Naive thymus-derived CD4-positive, alpha-beta T cell (primary cell): ENCODE measurements at regions of chr6 and their contacts with region 1.

Region 1: DNA sequence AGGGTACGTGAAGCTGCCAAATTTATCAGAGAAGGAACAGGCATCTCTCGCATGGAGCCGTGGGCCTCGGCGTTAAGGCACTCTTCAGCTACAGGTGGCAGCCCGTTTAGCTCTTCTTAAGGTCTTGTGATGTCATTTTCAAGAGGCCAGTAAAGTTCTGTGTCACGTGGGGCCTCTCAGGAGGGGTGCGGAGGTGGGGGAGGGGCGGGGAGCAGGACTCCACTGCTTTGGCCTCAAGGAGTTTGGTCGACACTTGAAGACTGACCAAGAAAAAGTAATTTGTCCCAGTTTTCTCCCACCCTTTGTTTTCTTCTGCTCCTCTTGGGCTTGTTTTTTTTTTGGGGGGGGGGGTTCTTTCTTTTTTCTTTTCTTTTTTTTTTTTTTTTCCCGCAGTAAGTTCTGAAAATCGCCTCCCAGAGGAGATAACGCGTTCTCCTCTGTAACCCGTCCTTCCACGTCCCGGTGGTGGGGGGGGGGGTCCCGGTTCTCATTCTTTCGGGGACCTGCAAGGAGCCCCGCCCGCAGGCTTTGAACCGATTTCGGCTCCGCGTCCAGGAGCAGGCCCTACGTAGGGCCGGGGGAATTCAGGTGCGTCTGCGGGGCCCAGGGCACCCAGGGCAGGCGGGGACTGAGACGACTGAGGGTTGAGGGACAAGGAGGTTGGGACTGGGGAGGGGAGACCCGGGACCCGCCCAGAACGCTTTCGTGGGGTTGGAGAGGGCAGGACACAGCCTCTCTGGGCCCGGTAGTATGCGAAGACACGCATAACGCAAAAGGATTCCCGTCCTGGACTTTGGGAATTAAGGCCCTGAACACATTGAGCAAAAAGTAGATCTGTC is 26.0 kb downstream of the GPX6 start:
- DNase-seq: peak; percentile 25 to 49 (median 39)
- ATAC-seq: peak; percentile 75
- H3K4me3 ChIP-seq: peak overlapping the region; percentile 42
- H3K4me3 Mint-ChIP-seq: peak overlapping the region; percentile 78 to 88 (median 83)
- H3K27ac ChIP-seq: peak overlapping the region; percentile 67
- H3K27ac Mint-ChIP-seq: peak overlapping the region; percentile 75 to 90 (median 82)
- H3K4me1 ChIP-seq: peaks cover 0 to 14% of the 10 kb centered on the region in 2 donors
- H3K4me1 Mint-ChIP-seq: peaks cover 16 to 32% (median 20%) of the 10 kb centered on the region in 7 donors
- H3K27me3 ChIP-seq: peaks cover 0 to 4% of the 10 kb centered on the region in 2 donors
- H3K27me3 Mint-ChIP-seq: peaks cover 17 to 73% (median 63%) of the 10 kb centered on the region in 5 donors

Region 2: DNA sequence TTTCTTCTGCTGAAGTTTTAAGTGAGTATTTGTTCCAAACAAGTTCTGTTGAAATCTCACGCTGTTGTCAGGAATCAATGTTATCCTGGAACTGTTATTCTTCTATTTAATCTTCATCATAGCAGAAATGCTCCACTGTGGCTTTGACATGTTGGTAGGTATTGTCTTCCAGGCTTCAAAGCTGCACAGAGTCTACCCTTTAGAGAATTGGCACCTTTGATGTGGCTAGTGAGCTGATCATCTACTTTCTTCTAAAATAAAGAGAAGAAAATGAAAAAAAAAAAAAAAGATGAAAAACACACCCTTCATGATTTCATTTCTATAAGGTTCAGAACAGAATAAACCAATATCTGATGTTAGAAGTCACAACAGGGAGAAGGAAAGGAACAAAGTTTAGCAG is 40.5 kb before region 1 on chr6:
- CTCF ChIA-PET with region 1: no interaction called
- POLR2A ChIA-PET with region 1: no interaction called
- intact Hi-C with region 1: loop called in 1 of 2 experiments (anchors 2 kb)
- DNase-seq: peak in 7 of 9 donors; percentile 60 to 80 (median 73)
- ATAC-seq: peak; percentile 89
- H3K4me3 ChIP-seq: no peak overlapping the region
- H3K4me3 Mint-ChIP-seq: peak overlapping the region in 7 of 10 donors; percentile 19 to 56 (median 32)
- H3K27ac ChIP-seq: no peak overlapping the region
- H3K27ac Mint-ChIP-seq: peak overlapping the region in 7 of 9 donors; percentile 38 to 81 (median 59)
- H3K4me1 ChIP-seq: peaks cover 0 to 12% of the 10 kb centered on the region in 2 donors
- H3K4me1 Mint-ChIP-seq: peaks cover 8 to 28% (median 22%) of the 10 kb centered on the region in 7 donors
- H3K27me3 ChIP-seq: peaks cover 0 to 6% of the 10 kb centered on the region in 2 donors
- H3K27me3 Mint-ChIP-seq: peaks cover 9 to 47% (median 27%) of the 10 kb centered on the region in 5 donors

Region 3: GRCh38 chr6:28474441-28475219 is 15.0 kb before region 1 on chr6:
- CTCF ChIA-PET with region 1: no interaction called
- POLR2A ChIA-PET with region 1: interaction called, 3 read pairs
- intact Hi-C with region 1: loop called in 1 of 2 experiments (anchors 1 kb)
- DNase-seq: peak in 7 of 9 donors; percentile 10 to 36 (median 21)
- ATAC-seq: no peak
- H3K4me3 ChIP-seq: no peak overlapping the region
- H3K4me3 Mint-ChIP-seq: peak overlapping the region; percentile 4 to 68 (median 31)
- H3K27ac ChIP-seq: no peak overlapping the region
- H3K27ac Mint-ChIP-seq: peak overlapping the region in 1 of 9 donors; percentile 20
- H3K4me1 ChIP-seq: no peaks in the 10 kb centered on the region
- H3K4me1 Mint-ChIP-seq: peaks cover 2 to 16% (median 10%) of the 10 kb centered on the region in 7 donors
- H3K27me3 ChIP-seq: peaks cover 0 to 7% of the 10 kb centered on the region in 2 donors
- H3K27me3 Mint-ChIP-seq: peaks cover 50 to 74% (median 64%) of the 10 kb centered on the region in 5 donors

Region 4: DNA sequence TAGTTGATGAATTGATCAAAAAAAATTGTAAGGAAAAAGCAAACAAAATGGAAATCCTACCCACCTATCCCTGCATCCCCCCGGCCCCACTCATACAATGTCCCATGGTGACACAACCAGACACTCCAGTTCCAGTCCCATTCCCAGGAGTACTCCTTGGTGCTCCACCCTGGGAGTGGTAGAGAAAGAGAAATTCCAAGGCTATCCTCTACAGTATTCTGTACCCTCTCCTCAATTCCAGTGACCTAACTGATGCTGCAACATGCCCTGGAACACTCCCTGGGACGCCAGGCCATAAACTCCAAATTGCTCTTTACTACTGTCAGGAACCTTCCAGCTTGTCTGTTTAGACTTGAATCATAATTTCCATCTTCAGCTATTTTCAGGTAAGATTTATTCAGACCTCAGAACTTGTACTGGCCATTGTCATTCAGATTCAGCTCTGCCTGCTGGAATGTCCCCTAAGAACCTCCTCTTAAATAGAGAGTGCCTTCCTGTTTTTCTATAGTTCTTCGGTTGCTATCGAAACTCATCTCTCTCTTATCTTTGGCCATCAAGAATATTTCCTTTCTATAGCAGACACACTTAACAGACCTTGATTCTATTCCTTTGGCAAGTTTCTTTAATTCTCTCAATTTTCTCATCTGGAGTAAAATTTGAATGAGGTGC is 17.4 kb after region 1 on chr6:
- CTCF ChIA-PET with region 1: no interaction called
- POLR2A ChIA-PET with region 1: interaction called, 3 read pairs
- intact Hi-C with region 1: loop called in 1 of 2 experiments (anchors 2 kb)
- DNase-seq: peak in 4 of 9 donors; percentile 6 to 17 (median 10)
- ATAC-seq: peak; percentile 37
- H3K4me3 ChIP-seq: no peak overlapping the region
- H3K4me3 Mint-ChIP-seq: peak overlapping the region in 9 of 10 donors; percentile 14 to 70 (median 56)
- H3K27ac ChIP-seq: no peak overlapping the region
- H3K27ac Mint-ChIP-seq: peak overlapping the region; percentile 10 to 82 (median 64)
- H3K4me1 ChIP-seq: no peaks in the 10 kb centered on the region
- H3K4me1 Mint-ChIP-seq: peaks cover 11 to 28% (median 20%) of the 10 kb centered on the region in 7 donors
- H3K27me3 ChIP-seq: no peaks in the 10 kb centered on the region
- H3K27me3 Mint-ChIP-seq: peaks cover 0 to 16% (median 9%) of the 10 kb centered on the region in 5 donors

Region 5: GRCh38 chr6:28580475-28580874 is 90.9 kb after region 1 on chr6:
- CTCF ChIA-PET with region 1: interaction called, 20 read pairs
- POLR2A ChIA-PET with region 1: no interaction called
- intact Hi-C with region 1: loop called in 1 of 2 experiments (anchors 2 kb)
- DNase-seq: peak in 2 of 9 donors; percentile 16 to 24
- ATAC-seq: no peak
- H3K4me3 ChIP-seq: no peak overlapping the region
- H3K4me3 Mint-ChIP-seq: no peak overlapping the region
- H3K27ac ChIP-seq: no peak overlapping the region
- H3K27ac Mint-ChIP-seq: no peak overlapping the region
- H3K4me1 ChIP-seq: no peaks in the 10 kb centered on the region
- H3K4me1 Mint-ChIP-seq: no peaks in the 10 kb centered on the region
- H3K27me3 ChIP-seq: no peaks in the 10 kb centered on the region
- H3K27me3 Mint-ChIP-seq: peaks cover 0 to 43% (median 25%) of the 10 kb centered on the region in 5 donors